Mammary epithelial cell (primary cell): ENCODE measurements at regions of chr6 and their contacts with region 1.

Region 1: GRCh38 chr6:36227379-36228228 is 31.1 kb downstream of the BRPF3 start:
- DNase-seq: peak; percentile 69
- H3K4me3 ChIP-seq: no peak overlapping the region
- H3K27ac ChIP-seq: no peak overlapping the region
- H3K4me1 ChIP-seq: peaks cover 24% of the 10 kb centered on the region
- H3K27me3 ChIP-seq: no peaks in the 10 kb centered on the region
- CTCF ChIP-seq: no peak

Region 2: DNA sequence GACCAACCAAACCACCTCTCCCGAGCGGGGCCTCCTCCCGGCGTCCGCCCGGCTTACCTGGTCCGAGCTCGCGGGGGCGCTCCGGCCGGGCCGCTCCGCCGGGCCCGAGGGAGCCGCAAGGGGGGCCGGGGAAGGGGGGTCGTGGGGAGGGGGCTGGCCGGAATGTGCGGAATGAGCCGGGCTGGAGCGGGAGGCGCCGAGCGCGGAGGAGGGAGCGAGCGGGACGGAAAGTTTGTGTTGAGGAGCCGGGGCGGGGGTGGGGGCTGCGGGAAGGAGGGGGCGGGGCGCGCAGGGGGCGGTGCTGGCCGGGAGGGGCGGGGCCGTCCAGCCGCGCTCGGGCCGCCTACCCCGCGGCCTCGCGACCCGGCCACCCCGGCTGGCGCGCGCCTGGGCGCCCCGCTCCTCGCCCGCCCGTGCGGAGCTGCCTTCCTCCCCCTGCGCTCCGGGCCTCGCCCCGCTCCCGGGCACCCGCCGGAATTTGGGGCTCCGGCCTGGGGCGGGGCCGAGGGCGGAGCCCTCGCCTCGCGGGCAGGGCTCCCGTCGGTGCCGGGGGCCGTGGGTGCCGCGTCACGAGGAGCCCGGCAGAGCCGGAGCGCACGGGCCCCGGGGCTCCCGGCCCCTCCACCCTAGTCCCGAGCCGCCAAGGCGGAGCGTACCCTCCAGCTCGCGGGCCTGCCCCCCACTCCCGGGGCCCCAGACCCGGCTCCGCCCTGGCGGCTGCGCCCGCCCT is 730.6 kb before region 1 on chr6 and contains the start of gene TEAD3:
- CTCF ChIA-PET with region 1: no interaction called
- dilution Hi-C with region 1: no loop called
- in situ Hi-C with region 1: no loop called
- intact Hi-C with region 1: no loop called
- DNase-seq: peak; percentile 76
- H3K4me3 ChIP-seq: peak within 1 kb of the TSS; percentile 69 to 88 (median 78)
- H3K27ac ChIP-seq: peak within 1 kb of the TSS; percentile 85
- H3K4me1 ChIP-seq: peaks cover 37% of the 10 kb centered on the region
- H3K27me3 ChIP-seq: no peaks in the 10 kb centered on the region
- CTCF ChIP-seq: peak in 1 of 2 donors; percentile 26
- total RNA-seq, gene TEAD3: 12.5 to 26.4 TPM

Region 3: GRCh38 chr6:36289281-36289878 is 61.8 kb after region 1 on chr6:
- CTCF ChIA-PET with region 1: no interaction called
- dilution Hi-C with region 1: no loop called
- in situ Hi-C with region 1: no loop called
- intact Hi-C with region 1: loop called (anchors 5 kb)
- DNase-seq: peak; percentile 47
- H3K4me3 ChIP-seq: no peak overlapping the region
- H3K27ac ChIP-seq: no peak overlapping the region
- H3K4me1 ChIP-seq: no peaks in the 10 kb centered on the region
- H3K27me3 ChIP-seq: peaks cover 4% of the 10 kb centered on the region
- CTCF ChIP-seq: no peak